ENCODE measurements at regions of chr7 and their contacts with region 1.

Region 1: DNA sequence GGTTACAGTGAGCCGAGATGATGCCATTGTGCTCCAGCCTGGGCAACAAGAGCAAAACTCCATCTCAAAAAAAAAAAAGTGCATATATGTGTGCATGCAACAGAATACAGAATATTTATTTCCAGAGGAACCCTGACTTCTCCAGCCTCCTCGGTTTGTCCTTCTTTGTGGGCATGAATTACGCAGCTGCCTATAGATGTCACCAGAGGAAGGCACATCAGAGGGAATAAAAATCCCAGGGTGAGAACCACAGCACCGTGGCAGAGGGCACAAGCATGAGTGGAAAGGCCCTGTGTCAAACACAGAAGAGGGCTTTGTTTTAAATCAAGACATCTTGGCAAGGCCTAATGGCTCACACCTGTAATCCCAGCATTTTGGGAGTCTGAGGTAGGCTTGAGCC is 24.4 kb upstream of the OCM2 start:
- DNase-seq: no peak
- H3K4me3 ChIP-seq: no peak overlapping the region
- H3K27ac ChIP-seq: no peak overlapping the region
- H3K4me1 ChIP-seq: no peaks in the 10 kb centered on the region
- H3K27me3 ChIP-seq: no peaks in the 10 kb centered on the region
- CTCF ChIP-seq: no peak
- POLR2A ChIP-seq: no peak

Region 2: GRCh38 chr7:97845622-97846203 is 168.6 kb before region 1 on chr7:
- CTCF ChIA-PET with region 1: interaction called, 5 read pairs
- POLR2A ChIA-PET with region 1: no interaction called
- dilution Hi-C with region 1: no loop called
- intact Hi-C with region 1: loop called (anchors 10 kb)
- DNase-seq: peak; percentile 36
- H3K4me3 ChIP-seq: no peak overlapping the region
- H3K27ac ChIP-seq: no peak overlapping the region
- H3K4me1 ChIP-seq: no peaks in the 10 kb centered on the region
- H3K27me3 ChIP-seq: no peaks in the 10 kb centered on the region
- CTCF ChIP-seq: peak in 1 of 2 donors; percentile 20
- POLR2A ChIP-seq: no peak

Region 3: GRCh38 chr7:98000356-98000755 is 14.0 kb before region 1 on chr7:
- CTCF ChIA-PET with region 1: interaction called, 13 read pairs
- POLR2A ChIA-PET with region 1: no interaction called
- dilution Hi-C with region 1: no loop called
- intact Hi-C with region 1: no loop called
- DNase-seq: no peak
- H3K4me3 ChIP-seq: no peak overlapping the region
- H3K27ac ChIP-seq: no peak overlapping the region
- H3K4me1 ChIP-seq: no peaks in the 10 kb centered on the region
- H3K27me3 ChIP-seq: no peaks in the 10 kb centered on the region
- CTCF ChIP-seq: no peak
- POLR2A ChIP-seq: no peak

Region 4: GRCh38 chr7:98352621-98353020 is 338.3 kb after region 1 on chr7:
- CTCF ChIA-PET with region 1: no interaction called
- POLR2A ChIA-PET with region 1: no interaction called
- dilution Hi-C with region 1: no loop called
- intact Hi-C with region 1: no loop called
- DNase-seq: no peak
- H3K4me3 ChIP-seq: no peak overlapping the region
- H3K27ac ChIP-seq: no peak overlapping the region
- H3K4me1 ChIP-seq: peaks cover 15% of the 10 kb centered on the region
- H3K27me3 ChIP-seq: no peaks in the 10 kb centered on the region
- CTCF ChIP-seq: no peak
- POLR2A ChIP-seq: no peak